Panc1 (cell line): ENCODE measurements at regions of chr10 and their contacts with region 1.

Region 1: GRCh38 chr10:96325719-96326373 is 21.6 kb downstream of the DNTT start:
- DNase-seq: no peak
- ATAC-seq: no peak
- H3K4me3 ChIP-seq: no peak overlapping the region
- H3K27ac ChIP-seq: no peak overlapping the region
- H3K4me1 ChIP-seq: no peaks in the 10 kb centered on the region
- H3K27me3 ChIP-seq: peaks cover 56% of the 10 kb centered on the region
- CTCF ChIP-seq: no peak

Region 2: GRCh38 chr10:96586419-96587263 is 260.8 kb after region 1 on chr10 and contains the start of gene TM9SF3:
- CTCF ChIA-PET with region 1: interaction called, 10 read pairs
- POLR2A ChIA-PET with region 1: no interaction called
- in situ Hi-C with region 1: no loop called
- intact Hi-C with region 1: no loop called
- DNase-seq: no peak
- ATAC-seq: peak; percentile 96
- H3K4me3 ChIP-seq: peak within 1 kb of the TSS; percentile 93 to 97
- H3K27ac ChIP-seq: peak within 1 kb of the TSS; percentile 100
- H3K4me1 ChIP-seq: peaks cover 34% of the 10 kb centered on the region
- H3K27me3 ChIP-seq: no peaks in the 10 kb centered on the region
- CTCF ChIP-seq: peak; percentile 16
- total RNA-seq, gene TM9SF3: 179 TPM